ENCODE measurements at regions of chr16 and their contacts with region 1.

Region 1: DNA sequence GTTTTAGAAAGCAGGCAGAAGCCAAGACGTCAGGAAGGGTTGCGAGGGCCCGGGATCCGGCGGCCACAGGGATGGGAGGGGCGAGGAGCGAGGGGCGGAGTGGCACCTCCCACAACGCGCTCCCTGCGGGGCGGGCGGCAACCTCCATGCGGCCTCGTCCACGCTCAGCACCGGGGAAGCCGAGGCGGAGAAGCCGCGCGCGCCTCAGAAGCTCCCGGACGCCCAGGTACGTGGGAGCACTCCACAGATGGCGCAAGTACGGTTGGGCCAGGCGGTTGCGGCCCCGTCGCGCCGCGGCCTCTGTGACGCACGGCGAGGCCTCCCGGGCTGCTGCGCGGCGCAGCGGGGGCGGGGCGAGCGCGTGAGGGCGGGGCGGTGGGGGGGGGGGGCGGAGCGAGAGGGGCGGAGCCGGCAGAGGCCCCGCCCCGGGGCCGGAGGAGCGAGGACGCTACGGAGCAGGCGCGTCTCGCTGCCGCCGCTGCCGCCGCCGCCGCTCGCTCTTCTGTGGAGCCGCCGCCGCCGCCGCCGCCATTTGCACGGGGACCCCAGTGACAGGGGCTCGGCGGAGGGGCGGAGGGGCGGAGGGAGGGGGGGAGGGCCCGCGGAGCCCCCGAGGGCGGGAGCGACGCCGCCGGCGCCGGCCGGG is at the start of gene TENT4B:
- DNase-seq: peak; percentile 57
- ATAC-seq: peak; percentile 75
- H3K4me3 ChIP-seq: peak within 1 kb of the TSS; percentile 90
- H3K27ac ChIP-seq: peak within 1 kb of the TSS; percentile 79
- H3K4me1 ChIP-seq: peaks cover 11% of the 10 kb centered on the region; the same call in 1 of the 2 replicates
- H3K27me3 ChIP-seq: no peaks in the 10 kb centered on the region
- CTCF ChIP-seq: no peak
- total RNA-seq, gene TENT4B: 6.3 and 7.4 TPM in 2 replicates

Region 2: GRCh38 chr16:50024684-50025536 is 128.0 kb before region 1 on chr16 and contains the start of gene CNEP1R1:
- CTCF ChIA-PET with region 1: no interaction called
- POLR2A ChIA-PET with region 1: no interaction called
- intact Hi-C with region 1: loop called (anchors 1 kb)
- DNase-seq: peak; percentile 93
- ATAC-seq: peak; percentile 93
- H3K4me3 ChIP-seq: peak within 1 kb of the TSS; percentile 95
- H3K27ac ChIP-seq: no peak within 1 kb of the TSS
- H3K4me1 ChIP-seq: peaks cover 6% of the 10 kb centered on the region
- H3K27me3 ChIP-seq: 0 out of 2 replicates have a peak, but pooled peaks cover 4% of the 10 kb centered on the region
- CTCF ChIP-seq: peak; percentile 91
- total RNA-seq, gene CNEP1R1: 7.0 and 10.5 TPM in 2 replicates

Region 3: DNA sequence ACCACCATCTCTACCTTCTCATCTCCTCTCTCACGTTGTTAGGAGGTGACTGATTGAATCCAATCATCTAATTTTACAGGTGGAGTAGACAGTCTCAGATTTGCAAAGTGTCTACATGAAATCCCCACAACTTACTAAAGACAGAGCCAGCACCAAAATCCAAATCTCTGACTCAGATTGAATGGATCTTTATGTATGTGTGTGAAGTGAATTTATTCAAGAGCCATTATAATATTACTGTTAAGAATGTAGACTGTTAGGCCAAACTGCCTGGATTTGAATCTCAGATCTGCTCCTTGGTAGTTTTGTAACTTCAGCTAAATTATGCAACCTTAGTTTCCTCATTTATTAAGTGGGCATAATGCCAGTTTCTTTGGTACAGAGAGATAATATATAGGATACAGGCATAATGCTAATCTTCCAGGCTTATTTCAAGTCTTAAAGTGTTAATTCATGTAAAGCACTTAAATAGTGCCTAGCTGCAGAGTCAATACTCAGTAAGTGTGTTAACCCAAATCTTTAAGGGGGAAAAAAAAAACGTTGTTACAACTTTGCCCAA is 115.2 kb before region 1 on chr16:
- CTCF ChIA-PET with region 1: no interaction called
- POLR2A ChIA-PET with region 1: interaction called, 10 read pairs
- intact Hi-C with region 1: no loop called
- DNase-seq: no peak
- ATAC-seq: no peak
- H3K4me3 ChIP-seq: no peak overlapping the region
- H3K27ac ChIP-seq: no peak overlapping the region
- H3K4me1 ChIP-seq: no peaks in the 10 kb centered on the region
- H3K27me3 ChIP-seq: peaks cover 3% of the 10 kb centered on the region; the same call in 1 of the 2 replicates
- CTCF ChIP-seq: no peak

Region 4: GRCh38 chr16:50065624-50066481 is 87.1 kb before region 1 on chr16 and contains the start of gene HEATR3:
- CTCF ChIA-PET with region 1: no interaction called
- POLR2A ChIA-PET with region 1: no interaction called
- intact Hi-C with region 1: loop called (anchors 10 kb)
- DNase-seq: peak; percentile 87
- ATAC-seq: peak; percentile 92
- H3K4me3 ChIP-seq: peak within 1 kb of the TSS; percentile 85
- H3K27ac ChIP-seq: peak within 1 kb of the TSS; percentile 80
- H3K4me1 ChIP-seq: peaks cover 9% of the 10 kb centered on the region
- H3K27me3 ChIP-seq: no peaks in the 10 kb centered on the region
- CTCF ChIP-seq: no peak
- total RNA-seq, gene HEATR3: 18.7 and 19.0 TPM in 2 replicates

Region 5: DNA sequence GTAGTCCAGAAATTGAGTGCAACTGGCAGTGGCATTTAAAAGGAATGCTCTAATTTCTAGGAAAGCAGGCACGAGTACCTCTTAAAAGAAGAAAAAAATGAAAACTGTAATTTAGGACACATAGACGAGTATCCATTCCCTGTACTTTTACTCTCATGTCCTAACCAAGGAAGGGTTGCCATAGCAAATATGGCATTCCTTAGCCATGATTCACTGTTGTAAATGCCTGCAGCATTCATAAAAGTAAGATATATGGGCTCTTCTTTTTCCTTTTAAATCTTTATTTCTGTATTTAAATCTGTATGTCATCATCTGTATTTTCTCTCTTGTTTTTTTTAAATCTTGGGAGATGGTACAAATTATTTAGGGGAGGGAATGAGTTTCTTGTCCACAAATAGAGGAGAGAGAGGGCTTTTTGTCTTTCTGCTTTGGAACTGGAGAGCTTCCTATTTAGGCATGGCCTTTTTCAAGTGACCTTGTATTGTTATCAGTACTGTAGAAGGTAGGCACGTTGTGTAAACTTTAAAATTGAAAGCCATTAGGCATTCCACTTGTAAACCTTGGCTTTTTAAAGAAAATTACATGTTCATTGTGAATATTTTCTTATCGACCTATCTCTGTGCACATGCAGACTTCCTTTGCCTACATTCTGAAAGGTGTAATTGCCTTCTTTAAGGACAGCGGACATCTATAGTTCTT is 50.1 kb after region 1 on chr16:
- CTCF ChIA-PET with region 1: no interaction called
- POLR2A ChIA-PET with region 1: no interaction called
- intact Hi-C with region 1: loop called (anchors 2 kb)
- DNase-seq: peak; percentile 91
- ATAC-seq: peak; percentile 83
- H3K4me3 ChIP-seq: peak overlapping the region; percentile 42; the same call in 1 of the 2 replicates
- H3K27ac ChIP-seq: peak overlapping the region; percentile 75
- H3K4me1 ChIP-seq: peaks cover 47% of the 10 kb centered on the region
- H3K27me3 ChIP-seq: no peaks in the 10 kb centered on the region
- CTCF ChIP-seq: no peak

Measured in PC-3 (cell line).